ENCODE measurements at regions of chr10 and their contacts with region 1.

Region 1: DNA sequence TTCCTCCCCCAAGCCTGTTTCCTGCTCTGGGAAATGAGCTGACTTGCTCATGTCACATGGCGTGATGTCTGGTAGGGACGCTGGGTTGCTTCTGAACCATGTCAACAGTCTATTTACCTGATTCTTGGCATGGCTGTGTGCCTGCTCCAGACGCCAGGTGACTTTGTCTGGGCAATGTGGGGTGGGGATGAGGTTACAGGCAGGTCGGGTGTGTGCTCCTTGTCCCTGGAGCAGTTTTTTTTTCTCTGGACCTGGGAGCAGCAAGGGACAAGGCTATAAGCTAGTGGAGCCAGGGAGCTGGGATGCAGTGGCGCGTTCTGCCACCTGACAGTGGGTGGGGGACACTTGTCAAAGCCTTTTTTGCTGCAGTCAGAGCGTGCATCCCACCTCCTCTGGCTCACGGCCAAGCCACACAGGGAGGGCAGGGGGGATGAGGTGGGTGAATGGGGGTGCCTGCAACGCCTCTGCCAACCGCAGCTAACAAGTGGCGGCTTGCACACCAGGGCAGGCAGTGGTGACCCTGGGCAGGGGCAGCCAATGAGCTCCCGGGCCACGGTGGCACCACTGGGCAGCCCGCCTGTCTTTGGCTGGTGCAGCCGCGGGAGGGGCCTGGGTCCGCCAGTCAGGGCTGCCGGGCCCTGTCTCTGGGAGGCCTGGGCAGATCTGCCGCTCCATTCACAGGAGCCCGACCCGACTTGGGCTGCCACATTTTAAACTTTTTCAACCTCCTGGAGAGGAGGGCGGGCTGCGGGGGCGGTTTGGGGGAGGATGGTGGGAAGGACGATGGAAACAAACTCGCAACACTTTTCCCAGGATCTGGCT is 22.9 kb downstream of the DNAJB12 start:
- DNase-seq: peak; percentile 94 to 96
- ATAC-seq: peak; percentile 75 to 90 (median 79)
- H3K4me3 ChIP-seq: peak overlapping the region; percentile 14
- H3K4me3 Mint-ChIP-seq: peak overlapping the region; percentile 86
- H3K27ac ChIP-seq: peak overlapping the region; percentile 95
- H3K27ac Mint-ChIP-seq: peak overlapping the region; percentile 96 to 97
- H3K4me1 ChIP-seq: peaks cover 98% of the 10 kb centered on the region
- H3K4me1 Mint-ChIP-seq: peaks cover 79 to 92% of the 10 kb centered on the region in 2 donors
- H3K27me3 ChIP-seq: no peaks in the 10 kb centered on the region
- H3K27me3 Mint-ChIP-seq: no peaks in the 10 kb centered on the region
- CTCF ChIP-seq: no peak

Region 2: DNA sequence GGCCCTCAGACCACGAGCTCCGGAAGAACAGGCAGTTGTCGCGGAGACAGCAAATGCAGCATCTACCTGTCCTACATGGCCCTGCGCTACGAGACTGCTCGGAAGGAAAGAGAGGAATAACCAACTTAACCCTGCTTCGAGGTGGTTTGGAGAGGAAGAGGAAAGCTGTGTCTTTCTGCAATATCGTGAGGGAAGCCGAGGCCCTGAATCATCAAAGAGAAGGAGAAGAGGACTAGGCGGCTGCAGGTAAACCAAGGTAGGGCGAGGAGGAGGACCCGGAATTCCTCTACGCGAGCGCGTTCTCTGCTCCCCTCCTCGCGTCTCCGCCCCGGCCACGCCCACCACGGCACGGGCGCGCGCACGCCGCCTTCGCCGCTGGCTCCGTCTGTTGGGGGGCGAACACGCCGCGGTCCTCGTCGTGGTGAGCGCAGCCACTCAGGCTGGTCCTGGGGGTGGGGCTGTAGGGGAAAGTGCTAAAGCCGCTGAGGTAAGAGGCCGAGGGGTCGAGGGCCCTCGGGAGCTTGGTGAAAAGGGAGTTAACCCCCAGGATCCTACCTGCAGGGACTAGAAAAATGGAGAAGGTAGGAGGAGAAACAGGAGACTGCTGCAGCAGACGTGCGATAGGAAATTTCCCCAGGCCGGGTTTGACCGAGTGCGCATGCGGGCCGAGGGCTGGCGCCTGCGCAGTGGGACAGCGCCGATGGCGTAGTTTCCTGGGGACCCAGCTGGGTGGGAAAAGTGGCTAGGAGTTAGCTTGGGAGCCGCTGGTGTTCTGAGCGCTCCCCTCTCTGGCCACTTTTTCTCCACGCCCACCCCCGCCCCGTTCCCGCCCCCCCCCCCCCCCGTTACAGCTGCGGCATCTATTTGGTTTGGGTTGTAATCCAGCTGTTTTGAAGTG is 115.9 kb before region 1 on chr10 and contains the starts of genes ANAPC16 and ASCC1:
- intact Hi-C with region 1: loop called (anchors 2 kb)
- DNase-seq: peak; percentile 95 to 96
- ATAC-seq: peak; percentile 93 to 97 (median 93)
- H3K4me3 ChIP-seq: peak within 1 kb of the TSS; percentile 66
- H3K4me3 Mint-ChIP-seq: peak within 1 kb of the TSS; percentile 97
- H3K27ac ChIP-seq: peak within 1 kb of the TSS; percentile 93
- H3K27ac Mint-ChIP-seq: peak within 1 kb of the TSS; percentile 98 to 100
- H3K4me1 ChIP-seq: peaks cover 28% of the 10 kb centered on the region
- H3K4me1 Mint-ChIP-seq: peaks cover 20 to 45% of the 10 kb centered on the region in 2 donors
- H3K27me3 ChIP-seq: no peaks in the 10 kb centered on the region
- H3K27me3 Mint-ChIP-seq: no peaks in the 10 kb centered on the region
- CTCF ChIP-seq: no peak
- total RNA-seq, gene ANAPC16: 70.9 to 77.0 (median 71.0) TPM
- total RNA-seq, gene ASCC1: 26.0 to 35.2 (median 29.3) TPM

Region 3: DNA sequence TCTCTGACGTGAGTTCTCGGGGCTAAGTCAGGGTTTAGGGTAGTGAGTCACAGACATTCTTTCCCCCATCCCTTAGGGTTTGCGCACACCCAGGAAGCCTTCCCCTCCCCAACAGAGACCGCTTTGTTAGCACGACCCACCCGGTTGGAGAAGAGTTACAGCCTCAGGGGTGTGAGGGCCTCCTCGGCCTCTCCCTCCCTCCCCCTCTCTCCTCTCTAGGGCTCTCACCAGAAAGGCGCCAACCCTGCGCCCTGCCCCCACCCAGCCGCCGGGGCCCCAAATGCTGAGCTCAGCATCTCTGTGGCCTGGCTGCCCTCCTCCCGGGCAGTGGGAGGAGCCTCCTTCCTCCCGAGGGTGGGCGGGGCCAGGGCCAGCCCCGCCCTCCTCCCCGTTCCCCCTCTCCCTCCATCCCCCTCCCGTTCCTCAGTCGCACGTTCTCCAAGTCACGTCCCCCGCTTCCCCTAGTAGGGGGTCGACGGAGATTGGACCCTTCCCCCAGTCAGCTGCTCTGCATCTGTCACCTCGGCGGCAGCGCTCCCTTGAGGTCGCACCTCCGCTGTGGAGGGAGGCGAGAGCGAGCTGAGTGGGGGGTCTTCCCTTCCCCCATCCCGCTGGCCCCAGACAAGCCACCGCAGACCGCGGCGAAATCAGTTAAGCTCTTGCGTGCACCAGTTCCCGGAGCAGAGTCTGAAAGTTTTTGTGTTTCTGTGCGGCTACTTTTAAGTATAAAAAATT is 71.1 kb before region 1 on chr10:
- intact Hi-C with region 1: loop called (anchors 1 kb)
- DNase-seq: peak; percentile 85 to 89
- ATAC-seq: peak; percentile 70 to 89 (median 79)
- H3K4me3 ChIP-seq: peak overlapping the region; percentile 53
- H3K4me3 Mint-ChIP-seq: peak overlapping the region; percentile 87
- H3K27ac ChIP-seq: peak overlapping the region; percentile 82
- H3K27ac Mint-ChIP-seq: peak overlapping the region; percentile 98
- H3K4me1 ChIP-seq: peaks cover 73% of the 10 kb centered on the region
- H3K4me1 Mint-ChIP-seq: peaks cover 43 to 60% of the 10 kb centered on the region in 2 donors
- H3K27me3 ChIP-seq: no peaks in the 10 kb centered on the region
- H3K27me3 Mint-ChIP-seq: no peaks in the 10 kb centered on the region
- CTCF ChIP-seq: no peak

Region 4: DNA sequence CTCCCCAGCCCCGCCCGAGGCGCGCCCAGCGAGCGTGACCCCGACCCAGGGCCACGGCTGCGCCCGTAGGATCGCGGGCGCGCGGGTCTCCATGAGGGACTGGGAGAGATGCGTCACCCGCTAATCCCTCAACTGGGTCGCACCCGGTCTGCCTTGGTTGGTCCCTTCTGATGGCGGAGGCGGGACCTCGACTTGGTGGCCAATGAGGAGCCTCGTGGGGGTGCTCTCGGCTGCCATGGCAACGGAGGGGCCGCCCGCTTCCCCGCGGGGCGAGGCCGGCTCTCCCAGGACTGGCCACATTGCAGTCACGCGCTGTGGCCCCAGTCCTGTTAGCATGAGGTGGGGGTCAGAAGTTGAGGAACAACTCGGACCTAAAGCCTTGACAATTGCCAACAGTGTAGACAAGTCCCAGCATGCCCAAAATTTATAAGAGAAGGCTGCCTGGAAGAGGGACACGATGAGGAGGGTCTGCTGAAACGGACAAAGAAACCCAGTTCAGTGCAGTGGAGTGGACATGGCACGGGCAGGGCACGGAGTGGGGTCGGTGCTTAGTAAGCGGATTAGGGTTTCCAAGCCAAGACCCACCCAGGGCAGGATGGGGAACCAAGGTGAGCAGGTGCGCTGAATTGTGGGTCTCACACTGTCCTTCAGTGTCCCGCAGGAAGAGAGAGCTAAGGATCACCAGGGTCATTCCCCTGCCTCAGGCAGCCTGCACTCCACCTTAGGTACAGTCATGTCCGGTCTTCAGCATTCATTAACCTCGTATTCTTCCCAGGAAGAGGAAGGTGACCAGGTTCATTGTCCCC is 33.6 kb before region 1 on chr10:
- intact Hi-C with region 1: loop called (anchors 1 kb)
- DNase-seq: peak; percentile 88 to 95
- ATAC-seq: peak; percentile 74 to 85 (median 74)
- H3K4me3 ChIP-seq: peak overlapping the region; percentile 65
- H3K4me3 Mint-ChIP-seq: peak overlapping the region; percentile 89
- H3K27ac ChIP-seq: peak overlapping the region; percentile 98
- H3K27ac Mint-ChIP-seq: peak overlapping the region; percentile 97 to 99
- H3K4me1 ChIP-seq: peaks cover 51% of the 10 kb centered on the region
- H3K4me1 Mint-ChIP-seq: peaks cover 35 to 59% of the 10 kb centered on the region in 2 donors
- H3K27me3 ChIP-seq: no peaks in the 10 kb centered on the region
- H3K27me3 Mint-ChIP-seq: no peaks in the 10 kb centered on the region
- CTCF ChIP-seq: no peak

Region 5: DNA sequence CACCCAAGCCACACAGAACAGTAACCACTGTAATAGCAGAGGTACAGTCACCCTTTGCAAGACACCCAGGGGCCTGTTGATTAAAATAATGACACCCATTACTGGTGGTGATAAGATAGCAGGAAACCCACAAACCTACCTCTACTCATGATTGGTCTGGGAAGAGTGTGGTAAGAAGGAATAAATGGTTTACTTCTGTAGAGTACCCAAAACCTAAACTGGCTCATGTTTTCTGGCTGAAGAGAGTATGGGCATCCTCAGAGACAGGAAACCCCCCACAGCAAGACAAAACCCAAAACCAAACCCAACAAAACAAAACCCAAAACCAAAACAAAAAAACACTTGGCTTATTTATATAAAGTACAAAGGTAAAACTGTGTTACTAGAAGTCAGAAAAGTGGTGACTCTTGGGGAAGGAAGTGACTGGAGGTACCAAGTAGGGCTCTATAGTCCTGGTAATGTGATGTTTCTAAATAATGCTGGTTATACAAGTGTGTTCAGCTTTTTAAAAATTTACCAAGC is 38.5 kb after region 1 on chr10:
- intact Hi-C with region 1: loop called (anchors 2 kb)
- DNase-seq: peak in 1 of 2 donors; percentile 83
- ATAC-seq: peak; percentile 85 to 92 (median 89)
- H3K4me3 ChIP-seq: no peak overlapping the region
- H3K4me3 Mint-ChIP-seq: peak overlapping the region; percentile 73
- H3K27ac ChIP-seq: peak overlapping the region; percentile 56
- H3K27ac Mint-ChIP-seq: peak overlapping the region; percentile 78 to 90
- H3K4me1 ChIP-seq: peaks cover 29% of the 10 kb centered on the region
- H3K4me1 Mint-ChIP-seq: peaks cover 23 to 25% of the 10 kb centered on the region in 2 donors
- H3K27me3 ChIP-seq: no peaks in the 10 kb centered on the region
- H3K27me3 Mint-ChIP-seq: peaks cover 0 to 6% of the 10 kb centered on the region in 2 donors
- CTCF ChIP-seq: no peak

Measured in natural killer cell (primary cell).